Tibial artery (tissue), 4 donors: ENCODE measurements at regions of chr10 and their contacts with region 1.

Region 1: DNA sequence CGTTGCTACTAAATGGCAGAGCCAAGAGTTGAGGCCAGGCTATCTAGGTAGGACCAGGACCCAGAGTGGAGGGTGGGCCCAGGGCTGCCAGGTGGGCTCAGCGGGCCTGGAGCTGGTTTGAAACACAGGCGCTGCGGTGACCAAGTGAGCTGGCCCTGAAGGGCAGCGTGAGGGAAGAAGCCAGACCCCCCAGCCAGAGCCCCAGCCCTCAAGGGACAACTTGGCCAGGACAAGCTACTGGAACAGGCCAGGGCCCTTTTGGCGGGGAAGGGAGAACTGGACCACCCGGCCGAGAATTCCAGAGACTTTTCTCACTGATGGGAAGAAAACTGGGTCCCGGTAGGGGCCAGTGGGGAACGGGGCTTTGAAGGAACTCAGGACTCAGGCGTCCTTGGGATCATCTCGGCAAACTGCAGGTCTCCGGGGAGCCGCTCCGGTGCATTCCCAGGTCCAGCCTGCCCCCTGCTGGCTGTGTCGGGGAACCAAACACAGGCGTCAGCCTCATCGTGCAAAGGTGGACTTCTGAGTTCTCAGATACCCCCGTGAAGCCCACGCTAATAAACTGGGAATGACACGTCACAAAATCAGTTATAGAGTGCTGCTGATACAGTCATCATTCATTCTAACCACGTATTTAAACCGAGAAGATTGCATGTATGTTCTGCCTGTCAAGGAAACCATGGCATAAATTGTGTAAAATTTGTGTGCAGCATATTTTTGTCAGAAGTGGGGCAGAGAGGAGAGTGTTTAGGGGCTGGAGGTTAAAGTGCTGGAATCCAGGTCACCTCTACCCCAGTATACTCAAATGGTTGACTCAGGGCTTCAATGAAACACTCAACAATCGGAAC is 76.0 kb upstream of the CPXM2 start:
- DNase-seq: peak; percentile 70 to 85
- H3K4me3 ChIP-seq: no peak overlapping the region
- H3K27ac ChIP-seq: no peak overlapping the region
- H3K4me1 ChIP-seq: peaks cover 0 to 16% (median 10%) of the 10 kb centered on the region in 4 donors
- H3K27me3 ChIP-seq: peaks cover 0 to 45% of the 10 kb centered on the region in 2 donors
- CTCF ChIP-seq: peak; percentile 90 to 97

Region 2: DNA sequence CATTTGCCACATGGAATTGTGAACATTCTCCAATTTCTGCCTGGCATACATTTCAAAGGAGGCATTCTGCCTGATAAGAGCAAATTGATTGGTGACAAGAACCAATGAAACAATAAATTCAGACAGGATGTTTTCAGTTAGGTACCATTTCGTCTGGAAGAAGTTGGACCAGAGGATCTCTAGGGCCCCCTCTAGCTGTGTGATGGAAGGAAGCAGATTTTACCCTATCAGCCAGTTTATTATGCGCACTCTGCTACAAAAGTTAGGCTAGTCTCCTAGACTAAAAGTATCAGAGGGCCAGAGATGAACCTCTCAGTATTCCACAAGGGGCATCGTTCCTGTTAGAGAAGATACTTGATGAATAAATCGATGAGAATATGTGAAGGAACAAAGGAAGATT is 695.4 kb before region 1 on chr10:
- intact Hi-C with region 1: no loop called
- DNase-seq: no peak
- H3K4me3 ChIP-seq: no peak overlapping the region
- H3K27ac ChIP-seq: no peak overlapping the region
- H3K4me1 ChIP-seq: peaks cover 0 to 6% (median 0%) of the 10 kb centered on the region in 4 donors
- H3K27me3 ChIP-seq: peaks cover 0 to 8% of the 10 kb centered on the region in 2 donors
- CTCF ChIP-seq: no peak

Region 3: DNA sequence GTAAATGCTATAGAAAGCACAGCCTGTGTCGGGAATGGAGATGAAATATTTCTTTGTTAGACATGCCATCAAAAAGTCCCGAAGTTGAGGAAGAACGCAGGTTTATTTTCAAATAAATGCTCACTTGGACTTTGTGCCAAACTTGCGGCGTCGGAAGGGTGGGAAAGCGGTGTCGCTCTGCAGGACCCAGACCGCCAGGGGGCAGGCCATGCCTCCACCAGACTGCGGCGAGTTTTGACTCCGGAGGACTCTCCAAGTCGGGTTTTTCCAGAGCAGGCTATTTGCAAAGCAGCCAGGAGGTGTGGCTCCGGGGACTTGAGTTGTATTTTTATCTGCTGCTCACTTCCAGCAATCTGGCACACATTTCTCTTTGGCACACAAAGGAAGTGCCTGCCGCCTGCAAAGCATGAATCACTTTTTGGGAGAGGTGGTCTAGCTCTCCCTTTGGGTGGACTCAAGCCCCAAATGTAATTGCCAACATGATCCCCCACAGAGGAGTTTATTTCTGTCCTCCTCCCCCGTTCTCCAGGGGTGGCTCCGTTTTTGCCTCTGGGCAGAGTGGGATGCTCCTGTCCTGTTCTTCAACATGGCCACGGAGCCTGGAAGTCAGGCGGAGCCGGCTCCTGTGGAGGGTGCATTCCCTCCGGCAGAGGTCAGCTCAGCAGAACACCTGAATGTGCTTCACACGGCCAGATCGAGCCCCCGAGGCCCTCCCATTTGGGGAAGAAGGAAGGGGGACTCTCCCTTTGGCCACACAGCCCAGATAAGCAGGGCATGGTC is 383.8 kb before region 1 on chr10:
- intact Hi-C with region 1: loop called (anchors 1 kb)
- DNase-seq: peak; percentile 84 to 95
- H3K4me3 ChIP-seq: no peak overlapping the region
- H3K27ac ChIP-seq: no peak overlapping the region
- H3K4me1 ChIP-seq: peaks cover 0 to 13% (median 9%) of the 10 kb centered on the region in 4 donors
- H3K27me3 ChIP-seq: peaks cover 0 to 25% of the 10 kb centered on the region in 2 donors
- CTCF ChIP-seq: peak; percentile 81 to 94

Region 4: DNA sequence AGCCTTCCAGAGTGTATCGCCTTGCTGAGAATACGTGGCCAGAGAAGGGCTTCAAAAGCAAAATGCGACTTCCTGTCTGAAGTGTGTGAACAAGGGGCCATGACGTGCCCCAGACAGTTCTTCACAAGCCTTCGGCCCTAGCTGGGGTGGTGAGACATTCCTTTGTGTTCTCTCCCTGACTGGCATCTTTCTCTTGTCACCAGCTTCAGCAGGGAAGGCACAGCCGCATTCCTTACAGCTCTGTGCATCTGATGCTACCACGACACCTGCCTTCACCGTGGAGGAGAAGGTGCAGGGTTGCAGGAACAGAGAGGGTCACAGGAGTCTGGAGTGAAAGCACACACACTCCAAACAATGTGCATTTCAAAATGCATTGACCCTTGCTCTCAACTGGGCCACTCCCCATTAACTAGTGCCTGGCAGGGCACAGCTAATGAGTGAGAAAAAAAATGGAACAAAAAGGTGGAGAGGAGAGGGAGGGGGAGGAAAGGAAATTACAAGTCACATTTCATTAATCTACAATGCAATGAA is 208.1 kb before region 1 on chr10:
- intact Hi-C with region 1: loop called (anchors 10 kb)
- DNase-seq: no peak
- H3K4me3 ChIP-seq: no peak overlapping the region
- H3K27ac ChIP-seq: no peak overlapping the region
- H3K4me1 ChIP-seq: peaks cover 0 to 6% (median 0%) of the 10 kb centered on the region in 4 donors
- H3K27me3 ChIP-seq: no peaks in the 10 kb centered on the region
- CTCF ChIP-seq: no peak

Region 5: GRCh38 chr10:123891133-123892071 is 76.2 kb before region 1 on chr10 and contains the start of gene CPXM2:
- intact Hi-C with region 1: no loop called
- DNase-seq: peak; percentile 45 to 77
- H3K4me3 ChIP-seq: peak within 1 kb of the TSS; percentile 74 to 86
- H3K27ac ChIP-seq: peak within 1 kb of the TSS; percentile 98 to 100
- H3K4me1 ChIP-seq: peaks cover 0 to 41% (median 15%) of the 10 kb centered on the region in 4 donors
- H3K27me3 ChIP-seq: no peaks in the 10 kb centered on the region
- CTCF ChIP-seq: no peak

Region 6: DNA sequence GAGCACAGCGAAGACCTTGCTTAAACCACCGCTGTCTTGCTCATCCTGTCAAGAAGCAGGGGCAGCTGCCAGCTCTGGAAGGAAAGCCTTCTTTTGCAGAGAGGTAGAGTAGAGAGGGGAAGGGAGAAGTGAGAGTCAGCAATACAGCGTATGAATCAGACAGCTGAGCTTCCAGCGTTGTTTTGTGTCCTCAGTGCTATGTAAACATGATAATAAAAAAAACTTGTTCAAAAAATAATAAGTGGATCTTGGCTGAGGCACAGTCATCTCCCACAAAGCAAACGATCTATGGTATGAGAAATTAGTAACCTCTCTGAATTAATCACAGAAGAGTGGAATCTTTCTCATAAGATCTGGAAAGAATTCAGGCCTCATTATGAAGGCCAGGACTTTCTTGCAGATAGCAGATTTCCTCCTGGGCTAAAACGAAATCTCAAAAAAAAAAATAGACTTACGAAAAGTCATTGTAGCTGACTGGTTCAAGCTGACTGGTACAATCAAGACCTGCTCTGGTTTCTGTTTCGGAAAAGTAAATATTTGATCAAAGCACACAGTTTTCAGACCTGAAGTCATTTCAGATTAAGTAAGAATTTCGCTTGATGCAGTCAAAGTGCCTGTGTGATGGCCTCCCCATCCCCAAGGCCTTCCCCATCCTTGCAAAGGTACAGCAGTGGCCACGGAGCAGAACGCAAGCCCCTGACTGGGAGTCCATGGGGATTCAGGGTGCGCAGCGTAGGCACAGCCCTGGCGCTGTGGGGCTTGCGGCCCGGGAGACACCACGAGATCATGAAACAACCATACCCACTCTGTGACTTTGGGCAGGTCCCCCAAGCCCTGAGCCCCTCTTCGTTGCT is 96.4 kb after region 1 on chr10:
- intact Hi-C with region 1: no loop called
- DNase-seq: no peak
- H3K4me3 ChIP-seq: no peak overlapping the region
- H3K27ac ChIP-seq: peak overlapping the region in 1 of 2 donors; percentile 3
- H3K4me1 ChIP-seq: peaks cover 0 to 51% (median 30%) of the 10 kb centered on the region in 4 donors
- H3K27me3 ChIP-seq: no peaks in the 10 kb centered on the region
- CTCF ChIP-seq: no peak

Region 7: DNA sequence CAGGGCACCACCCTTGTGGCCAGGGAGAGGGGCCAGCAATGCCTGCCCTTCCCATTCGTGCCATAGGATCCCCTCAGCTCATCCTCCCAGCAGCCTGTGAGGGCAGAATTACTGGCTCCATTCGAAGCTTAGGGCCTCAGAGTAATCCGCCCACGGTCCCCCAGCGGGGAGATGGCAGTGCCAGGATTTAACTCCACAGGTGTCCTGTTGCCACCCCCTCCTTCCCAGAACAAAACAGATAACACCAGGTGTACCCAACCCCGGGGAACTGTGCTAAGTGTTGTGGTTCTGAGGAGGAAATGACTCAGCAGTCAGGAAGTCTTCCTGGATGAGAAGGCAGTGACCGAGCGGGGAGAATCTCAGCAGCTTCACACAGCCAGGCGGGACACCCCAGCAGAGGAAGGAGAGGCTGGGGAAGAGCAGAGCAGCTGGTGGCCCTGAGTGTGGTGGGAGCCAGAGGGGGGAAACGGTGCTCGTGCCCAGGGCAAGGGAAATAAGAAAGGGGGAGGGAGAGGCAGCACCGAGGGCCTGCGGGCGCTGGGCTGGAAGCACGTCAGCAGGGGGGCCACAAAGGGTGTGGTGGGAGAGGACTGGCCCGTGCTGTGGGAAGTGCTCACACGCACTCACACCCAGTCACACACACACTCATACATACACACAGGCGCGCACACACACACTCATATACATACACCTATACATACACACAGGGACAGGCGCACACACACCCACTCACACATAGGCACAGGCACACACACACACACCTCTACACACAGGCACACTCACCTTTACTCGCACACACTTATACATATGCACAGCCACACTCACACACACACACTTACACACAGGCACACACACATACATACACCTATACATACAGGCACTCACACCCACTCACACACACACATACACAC is 185.6 kb after region 1 on chr10:
- intact Hi-C with region 1: no loop called
- DNase-seq: peak; percentile 44 to 78
- H3K4me3 ChIP-seq: no peak overlapping the region
- H3K27ac ChIP-seq: peak overlapping the region; percentile 66 to 74
- H3K4me1 ChIP-seq: peaks cover 4 to 51% (median 47%) of the 10 kb centered on the region in 4 donors
- H3K27me3 ChIP-seq: no peaks in the 10 kb centered on the region
- CTCF ChIP-seq: no peak